ENCODE measurements at regions of chr3 and their contacts with region 1.

Region 1: DNA sequence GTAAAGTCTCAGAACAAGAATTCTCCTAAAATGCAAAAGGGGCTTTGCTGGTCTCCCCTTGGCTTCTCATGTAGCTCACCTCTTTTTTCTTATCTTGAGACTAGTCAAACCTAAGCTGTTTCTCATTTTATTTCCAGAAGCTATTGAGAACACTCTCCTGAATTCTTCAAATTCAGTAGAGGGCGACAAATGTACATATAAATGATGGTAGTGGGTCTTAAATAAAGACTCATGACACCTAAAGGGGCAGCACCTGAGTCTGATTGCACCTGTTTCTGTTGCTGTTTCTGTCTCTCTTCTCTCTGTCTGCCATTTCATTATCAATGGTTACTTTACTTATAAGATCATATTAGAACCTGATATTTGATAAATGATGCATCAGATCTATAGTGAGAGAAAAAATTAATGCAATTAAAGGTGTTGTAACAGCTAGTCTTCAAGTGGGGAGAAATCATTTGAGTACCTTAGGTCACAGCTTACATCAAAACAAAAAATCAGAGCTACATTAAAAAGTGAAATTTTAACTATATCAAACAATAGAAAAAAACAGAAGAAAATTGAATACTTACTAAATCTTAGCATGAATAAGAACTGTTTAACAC is 7.0 kb downstream of the ADIPOQ start:
- DNase-seq: peak in 4 of 35 experiments; percentile 11 to 76 (median 20)
- ATAC-seq: peak; percentile 86 to 98 (median 95)
- H3K4me3 ChIP-seq: no peak overlapping the region
- H3K4me3 Mint-ChIP-seq: no peak overlapping the region
- H3K27ac ChIP-seq: no peak overlapping the region
- H3K27ac Mint-ChIP-seq: peak overlapping the region; percentile 60 to 72
- H3K4me1 ChIP-seq: peaks cover 0 to 4% of the 10 kb centered on the region in 2 experiments
- H3K4me1 Mint-ChIP-seq: peaks cover 11 to 22% (median 18%) of the 10 kb centered on the region in 3 donors
- H3K27me3 ChIP-seq: peaks cover 0 to 8% of the 10 kb centered on the region in 2 experiments
- H3K27me3 Mint-ChIP-seq: peaks cover 3 to 8% of the 10 kb centered on the region in 2 donors

Region 2: GRCh38 chr3:186826976-186827731 is 22.3 kb before region 1 on chr3:
- CTCF ChIA-PET with region 1: no interaction called
- POLR2A ChIA-PET with region 1: no interaction called
- DNase-seq: peak; percentile 63 to 93 (median 79)
- ATAC-seq: peak; percentile 93 to 95 (median 94)
- H3K4me3 ChIP-seq: peak overlapping the region; percentile 57 to 82
- H3K4me3 Mint-ChIP-seq: peak overlapping the region; percentile 67 to 73 (median 70)
- H3K27ac ChIP-seq: no peak overlapping the region
- H3K27ac Mint-ChIP-seq: no peak overlapping the region
- H3K4me1 ChIP-seq: peaks cover 5 to 30% of the 10 kb centered on the region in 2 experiments
- H3K4me1 Mint-ChIP-seq: peaks cover 15 to 24% (median 22%) of the 10 kb centered on the region in 3 donors
- H3K27me3 ChIP-seq: peaks cover 13 to 53% of the 10 kb centered on the region in 2 experiments
- H3K27me3 Mint-ChIP-seq: peaks cover 50 to 57% of the 10 kb centered on the region in 2 donors

Region 3: GRCh38 chr3:186959029-186959624 is 109.7 kb after region 1 on chr3:
- CTCF ChIA-PET with region 1: interaction called, 4 to 27 read pairs
- POLR2A ChIA-PET with region 1: no interaction called
- DNase-seq: no peak
- ATAC-seq: no peak
- H3K4me3 ChIP-seq: no peak overlapping the region
- H3K4me3 Mint-ChIP-seq: no peak overlapping the region
- H3K27ac ChIP-seq: no peak overlapping the region
- H3K27ac Mint-ChIP-seq: peak overlapping the region; percentile 5 to 52
- H3K4me1 ChIP-seq: peaks cover 0 to 36% of the 10 kb centered on the region in 2 experiments
- H3K4me1 Mint-ChIP-seq: peaks cover 65 to 85% (median 79%) of the 10 kb centered on the region in 3 donors
- H3K27me3 ChIP-seq: no peaks in the 10 kb centered on the region
- H3K27me3 Mint-ChIP-seq: no peaks in the 10 kb centered on the region

Region 4: DNA sequence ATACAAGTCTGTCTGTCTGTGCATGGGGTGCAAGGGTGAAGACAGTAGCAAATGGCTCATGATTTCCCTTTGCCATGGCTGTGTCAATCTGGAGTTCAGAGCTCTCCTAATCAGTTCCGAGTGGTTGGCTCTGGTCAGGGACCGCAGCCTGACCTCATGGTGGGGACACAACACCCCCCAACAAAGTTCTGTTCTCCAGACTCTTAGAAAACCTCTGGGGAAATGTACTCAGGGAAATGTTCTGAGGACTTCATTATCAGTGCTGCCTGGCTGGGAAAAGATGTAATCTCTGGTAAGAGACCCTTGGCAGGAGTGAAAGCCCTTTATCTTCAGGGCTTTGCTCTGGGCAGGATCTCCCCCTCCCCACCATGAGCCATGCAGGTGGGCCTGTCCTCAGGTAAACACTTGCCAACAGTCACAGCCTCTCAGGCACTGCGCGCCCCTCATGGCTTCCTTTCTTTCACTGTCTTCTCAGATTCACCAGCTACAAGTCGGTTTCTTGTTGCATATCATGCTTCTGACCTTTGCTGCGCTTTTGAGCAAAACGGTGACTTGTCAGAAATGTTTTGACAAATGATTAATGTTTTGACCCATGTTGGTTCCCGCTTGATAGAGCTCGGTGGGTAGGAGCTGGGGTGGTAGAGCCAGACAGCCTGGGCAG is 176.3 kb after region 1 on chr3:
- CTCF ChIA-PET with region 1: interaction called in 1 of 2 experiments, 24 read pairs
- POLR2A ChIA-PET with region 1: no interaction called
- DNase-seq: peak in 12 of 35 experiments; percentile 15 to 52 (median 34)
- ATAC-seq: peak; percentile 7 to 30 (median 27)
- H3K4me3 ChIP-seq: peak overlapping the region; percentile 41 to 90
- H3K4me3 Mint-ChIP-seq: peak overlapping the region; percentile 79 to 87 (median 84)
- H3K27ac ChIP-seq: peak overlapping the region; percentile 83
- H3K27ac Mint-ChIP-seq: peak overlapping the region; percentile 93 to 96
- H3K4me1 ChIP-seq: peaks cover 40 to 67% of the 10 kb centered on the region in 2 experiments
- H3K4me1 Mint-ChIP-seq: peaks cover 73 to 82% (median 79%) of the 10 kb centered on the region in 3 donors
- H3K27me3 ChIP-seq: no peaks in the 10 kb centered on the region
- H3K27me3 Mint-ChIP-seq: no peaks in the 10 kb centered on the region

Region 5: GRCh38 chr3:187112934-187113793 is 263.7 kb after region 1 on chr3:
- CTCF ChIA-PET with region 1: interaction called, 8 to 24 read pairs
- POLR2A ChIA-PET with region 1: interaction called in 1 of 2 experiments, 4 read pairs
- DNase-seq: peak in 2 of 35 experiments; percentile 31 to 71
- ATAC-seq: peak in 3 of 4 experiments; percentile 52 to 64 (median 58)
- H3K4me3 ChIP-seq: no peak overlapping the region
- H3K4me3 Mint-ChIP-seq: no peak overlapping the region
- H3K27ac ChIP-seq: no peak overlapping the region
- H3K27ac Mint-ChIP-seq: no peak overlapping the region
- H3K4me1 ChIP-seq: peaks cover 0 to 4% of the 10 kb centered on the region in 2 experiments
- H3K4me1 Mint-ChIP-seq: peaks cover 6 to 9% (median 6%) of the 10 kb centered on the region in 3 donors
- H3K27me3 ChIP-seq: no peaks in the 10 kb centered on the region
- H3K27me3 Mint-ChIP-seq: no peaks in the 10 kb centered on the region

Region 6: GRCh38 chr3:187164885-187165543 is 315.5 kb after region 1 on chr3:
- CTCF ChIA-PET with region 1: interaction called, 20 to 85 read pairs
- POLR2A ChIA-PET with region 1: interaction called in 1 of 2 experiments, 4 read pairs
- DNase-seq: peak in 25 of 35 experiments; percentile 3 to 84 (median 25)
- ATAC-seq: peak; percentile 48 to 70 (median 60)
- H3K4me3 ChIP-seq: no peak overlapping the region
- H3K4me3 Mint-ChIP-seq: no peak overlapping the region
- H3K27ac ChIP-seq: no peak overlapping the region
- H3K27ac Mint-ChIP-seq: no peak overlapping the region
- H3K4me1 ChIP-seq: peaks cover 0 to 3% of the 10 kb centered on the region in 2 experiments
- H3K4me1 Mint-ChIP-seq: peaks cover 4 to 10% (median 9%) of the 10 kb centered on the region in 3 donors
- H3K27me3 ChIP-seq: no peaks in the 10 kb centered on the region
- H3K27me3 Mint-ChIP-seq: peaks cover 6 to 7% of the 10 kb centered on the region in 2 donors

Region 7: DNA sequence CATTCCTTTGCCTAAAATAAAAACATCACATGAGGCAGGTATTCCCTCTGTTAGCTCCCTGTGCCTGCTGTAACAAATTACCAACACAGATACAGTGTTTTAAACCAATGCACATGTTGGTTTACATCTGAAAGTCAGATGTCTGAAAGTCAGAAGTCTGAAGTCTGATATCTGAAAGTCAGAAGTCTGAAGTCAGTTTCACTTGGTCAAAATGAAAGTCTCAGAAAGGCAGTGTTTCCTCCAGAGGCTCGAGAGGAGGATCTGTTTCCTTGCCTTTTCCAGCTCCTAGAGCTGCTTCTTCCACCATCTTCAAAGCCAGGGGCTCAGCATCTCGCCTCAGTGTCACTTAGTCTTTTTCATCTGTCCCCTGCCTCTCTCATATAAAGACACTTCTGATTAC is 798.7 kb after region 1 on chr3:
- CTCF ChIA-PET with region 1: no interaction called
- POLR2A ChIA-PET with region 1: no interaction called
- DNase-seq: no peak
- ATAC-seq: no peak
- H3K4me3 ChIP-seq: no peak overlapping the region
- H3K4me3 Mint-ChIP-seq: no peak overlapping the region
- H3K27ac ChIP-seq: no peak overlapping the region
- H3K27ac Mint-ChIP-seq: no peak overlapping the region
- H3K4me1 ChIP-seq: no peaks in the 10 kb centered on the region
- H3K4me1 Mint-ChIP-seq: no peaks in the 10 kb centered on the region
- H3K27me3 ChIP-seq: peaks cover 0 to 3% of the 10 kb centered on the region in 2 experiments
- H3K27me3 Mint-ChIP-seq: peaks cover 47 to 56% of the 10 kb centered on the region in 2 donors

Region 8: DNA sequence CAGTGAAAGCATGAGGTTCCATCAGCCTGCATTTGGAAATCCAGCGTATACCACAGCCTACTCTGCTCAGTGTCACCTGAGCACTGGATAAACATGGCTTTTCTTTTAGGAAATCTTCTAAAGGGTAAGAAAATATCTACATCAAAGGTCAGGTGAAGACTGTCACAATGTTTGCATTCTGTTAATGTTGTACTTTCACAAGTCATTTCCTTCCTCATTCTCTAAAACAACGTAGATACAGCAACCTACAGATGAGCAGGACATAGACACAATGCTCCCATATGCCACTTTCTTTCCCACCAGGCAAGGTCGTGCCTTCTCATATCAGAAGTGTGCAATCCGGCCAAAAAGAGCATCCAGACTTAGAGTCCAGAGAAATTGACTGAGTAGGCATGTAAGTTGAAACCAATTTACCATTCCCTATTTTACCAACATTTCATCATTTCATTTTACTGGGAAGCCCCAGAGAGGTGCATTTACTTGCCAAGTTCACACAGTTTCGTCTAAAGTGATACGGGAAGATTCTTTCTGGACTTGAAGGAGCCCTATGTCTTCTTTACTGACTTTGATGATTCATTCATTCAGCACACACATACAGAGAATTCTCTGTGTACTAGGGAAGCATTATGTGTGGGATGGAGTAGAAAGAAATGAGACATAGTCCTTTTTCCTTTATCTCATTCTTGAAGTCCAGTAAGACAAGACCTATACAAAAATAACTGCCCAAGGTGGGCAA is 1273.9 kb after region 1 on chr3:
- CTCF ChIA-PET with region 1: no interaction called
- POLR2A ChIA-PET with region 1: no interaction called
- DNase-seq: no peak
- ATAC-seq: no peak
- H3K4me3 ChIP-seq: no peak overlapping the region
- H3K4me3 Mint-ChIP-seq: no peak overlapping the region
- H3K27ac ChIP-seq: no peak overlapping the region
- H3K27ac Mint-ChIP-seq: no peak overlapping the region
- H3K4me1 ChIP-seq: peaks cover 2 to 3% of the 10 kb centered on the region in 2 experiments
- H3K4me1 Mint-ChIP-seq: peaks cover 0 to 6% (median 3%) of the 10 kb centered on the region in 3 donors
- H3K27me3 ChIP-seq: no peaks in the 10 kb centered on the region
- H3K27me3 Mint-ChIP-seq: no peaks in the 10 kb centered on the region

Measured in T-cell (primary cell).